GM12878 (cell line): ENCODE measurements at regions of chr7 and their contacts with region 1.

Region 1: DNA sequence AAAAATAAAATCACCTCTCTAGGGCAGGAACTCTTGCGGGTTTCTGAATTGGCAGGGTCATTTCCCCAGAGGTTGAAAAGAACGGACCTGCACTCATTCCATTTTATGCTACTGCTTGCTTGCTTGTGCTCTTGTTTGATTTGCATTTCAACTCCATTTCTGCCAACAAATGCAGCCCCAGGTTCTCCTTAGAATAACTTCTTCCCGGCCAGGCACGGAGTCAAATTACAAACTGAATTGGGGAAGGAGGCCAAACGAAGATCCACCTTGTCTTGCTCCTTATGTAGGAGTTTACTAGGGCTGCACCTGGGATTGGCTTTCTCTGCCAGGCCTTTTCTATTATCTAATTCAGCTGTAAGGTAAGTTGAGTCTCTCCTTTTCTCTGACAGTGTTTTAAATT is 79.6 kb downstream of the HGF start:
- DNase-seq: no peak
- ATAC-seq: no peak
- H3K4me3 ChIP-seq: no peak overlapping the region
- H3K27ac ChIP-seq: no peak overlapping the region
- H3K4me1 ChIP-seq: no peaks in the 10 kb centered on the region
- H3K27me3 ChIP-seq: no peaks in the 10 kb centered on the region
- CTCF ChIP-seq: no peak
- EP300 ChIP-seq: no peak
- POLR2A ChIP-seq: no peak
- RAD21 ChIP-seq: no peak

Region 2: GRCh38 chr7:81676813-81677212 is 13.4 kb before region 1 on chr7:
- CTCF ChIA-PET with region 1: interaction called, 4 read pairs
- POLR2A ChIA-PET with region 1: interaction called, 3 read pairs
- RAD21 ChIA-PET with region 1: interaction called, 10 read pairs
- SMC1A ChIA-PET with region 1: interaction called, 30 read pairs
- in situ Hi-C with region 1: no loop called
- intact Hi-C with region 1: no loop called
- DNase-seq: no peak
- ATAC-seq: peak; percentile 70
- H3K4me3 ChIP-seq: no peak overlapping the region
- H3K27ac ChIP-seq: no peak overlapping the region
- H3K4me1 ChIP-seq: peaks cover 5% of the 10 kb centered on the region; the same call in 1 of the 2 replicates
- H3K27me3 ChIP-seq: no peaks in the 10 kb centered on the region
- CTCF ChIP-seq: no peak
- EP300 ChIP-seq: no peak
- POLR2A ChIP-seq: no peak
- RAD21 ChIP-seq: no peak

Region 3: GRCh38 chr7:81704595-81704994 is 14.3 kb after region 1 on chr7:
- CTCF ChIA-PET with region 1: no interaction called
- POLR2A ChIA-PET with region 1: no interaction called
- RAD21 ChIA-PET with region 1: interaction called, 5 read pairs
- SMC1A ChIA-PET with region 1: interaction called, 20 read pairs
- in situ Hi-C with region 1: no loop called
- intact Hi-C with region 1: no loop called
- DNase-seq: no peak
- ATAC-seq: no peak
- H3K4me3 ChIP-seq: no peak overlapping the region
- H3K27ac ChIP-seq: no peak overlapping the region
- H3K4me1 ChIP-seq: no peaks in the 10 kb centered on the region
- H3K27me3 ChIP-seq: no peaks in the 10 kb centered on the region
- CTCF ChIP-seq: no peak
- EP300 ChIP-seq: no peak
- POLR2A ChIP-seq: no peak
- RAD21 ChIP-seq: no peak

Region 4: DNA sequence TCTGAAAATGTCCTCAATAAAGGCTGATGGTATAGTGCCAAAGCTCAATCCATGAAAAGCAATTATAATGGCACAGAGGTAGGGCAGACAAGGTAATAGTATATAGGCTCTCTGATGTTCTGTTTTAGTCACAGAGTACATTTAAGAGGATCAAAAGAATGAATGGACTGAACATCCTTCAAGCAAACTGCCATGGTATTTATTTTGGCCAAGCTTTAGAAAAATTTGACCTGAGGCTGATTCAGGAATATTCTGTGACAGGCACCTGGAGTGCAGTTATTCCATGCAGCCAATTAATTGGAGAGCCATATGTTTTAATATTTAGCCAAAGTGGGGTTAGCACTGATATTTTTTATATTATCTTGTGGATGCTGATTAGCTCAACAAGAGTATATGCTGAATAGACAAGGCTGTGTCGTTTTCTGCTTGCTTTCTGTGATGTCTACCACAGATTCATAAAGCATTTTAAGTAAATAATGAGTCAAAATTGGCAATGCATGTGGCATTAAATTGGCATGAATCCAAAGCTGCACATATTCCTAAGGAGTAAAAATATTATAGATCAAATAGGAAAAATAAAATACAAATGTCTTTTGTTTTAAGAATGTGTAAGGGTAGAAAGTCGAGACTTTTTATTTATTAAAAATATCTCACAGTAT is 1295.0 kb after region 1 on chr7:
- CTCF ChIA-PET with region 1: no interaction called
- POLR2A ChIA-PET with region 1: no interaction called
- RAD21 ChIA-PET with region 1: no interaction called
- SMC1A ChIA-PET with region 1: no interaction called
- in situ Hi-C with region 1: no loop called
- intact Hi-C with region 1: no loop called
- DNase-seq: no peak
- ATAC-seq: no peak
- H3K4me3 ChIP-seq: no peak overlapping the region
- H3K27ac ChIP-seq: no peak overlapping the region
- H3K4me1 ChIP-seq: no peaks in the 10 kb centered on the region
- H3K27me3 ChIP-seq: no peaks in the 10 kb centered on the region
- CTCF ChIP-seq: no peak
- EP300 ChIP-seq: no peak
- POLR2A ChIP-seq: no peak
- RAD21 ChIP-seq: no peak